Panc1 (cell line): ENCODE measurements at regions of chr11 and their contacts with region 1.

Region 1: GRCh38 chr11:65329944-65330403 is 3.7 kb upstream of the DPF2 start:
- DNase-seq: peak; percentile 80
- ATAC-seq: peak; percentile 56
- H3K4me3 ChIP-seq: peak overlapping the region in 1 of 2 experiments; percentile 0; a peak in 1 of 4 replicates
- H3K27ac ChIP-seq: 0 out of 2 replicates have a peak overlapping the region, but pooled peaks have one; percentile 5
- H3K4me1 ChIP-seq: peaks cover 5% of the 10 kb centered on the region
- H3K27me3 ChIP-seq: no peaks in the 10 kb centered on the region
- CTCF ChIP-seq: peak; percentile 94

Region 2: DNA sequence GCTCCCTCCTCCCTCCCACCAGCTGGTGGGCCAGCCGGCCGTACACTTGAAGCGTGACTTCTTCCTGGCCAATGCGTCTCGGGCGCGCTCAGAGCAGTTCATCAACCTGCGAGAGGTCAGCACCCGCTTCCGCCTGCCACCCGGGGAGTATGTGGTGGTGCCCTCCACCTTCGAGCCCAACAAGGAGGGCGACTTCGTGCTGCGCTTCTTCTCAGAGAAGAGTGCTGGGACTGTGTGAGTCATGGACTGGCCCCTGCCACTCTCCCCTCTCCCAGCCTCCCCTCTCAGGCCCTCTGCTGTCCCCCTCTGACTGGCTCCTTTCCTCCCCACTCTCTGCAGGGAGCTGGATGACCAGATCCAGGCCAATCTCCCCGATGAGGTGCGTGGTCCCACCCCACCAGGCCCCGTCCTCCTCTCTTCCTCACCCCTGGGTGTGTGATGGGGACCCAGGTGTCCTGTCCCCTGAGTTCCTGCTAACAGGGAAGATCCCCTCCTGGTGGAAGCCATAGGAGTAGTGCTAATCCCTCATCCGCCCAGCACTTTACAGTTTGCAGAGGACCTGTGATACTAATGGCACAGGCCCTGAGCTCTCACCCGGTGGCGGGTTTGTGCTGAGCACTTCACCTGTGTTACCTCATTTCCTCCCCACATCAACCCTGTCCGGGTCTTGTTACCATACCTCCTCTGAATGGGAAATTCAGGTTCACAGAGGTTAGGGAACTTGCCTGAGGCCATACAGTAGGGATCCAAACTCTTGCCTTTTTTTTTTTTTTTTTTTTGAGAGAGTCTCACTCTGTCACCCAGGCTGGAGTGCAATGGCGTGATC is 123.3 kb before region 1 on chr11:
- CTCF ChIA-PET with region 1: interaction called, 13 read pairs
- POLR2A ChIA-PET with region 1: no interaction called
- in situ Hi-C with region 1: no loop called
- intact Hi-C with region 1: no loop called
- DNase-seq: no peak
- ATAC-seq: no peak
- H3K4me3 ChIP-seq: no peak overlapping the region
- H3K27ac ChIP-seq: no peak overlapping the region
- H3K4me1 ChIP-seq: no peaks in the 10 kb centered on the region
- H3K27me3 ChIP-seq: no peaks in the 10 kb centered on the region
- CTCF ChIP-seq: no peak

Region 3: GRCh38 chr11:65225279-65226102 is 104.5 kb before region 1 on chr11:
- CTCF ChIA-PET with region 1: interaction called, 24 read pairs
- POLR2A ChIA-PET with region 1: no interaction called
- in situ Hi-C with region 1: no loop called
- intact Hi-C with region 1: no loop called
- DNase-seq: peak; percentile 27
- ATAC-seq: peak; percentile 91
- H3K4me3 ChIP-seq: peak overlapping the region; percentile 38 to 61
- H3K27ac ChIP-seq: peak overlapping the region; percentile 65
- H3K4me1 ChIP-seq: peaks cover 7% of the 10 kb centered on the region
- H3K27me3 ChIP-seq: no peaks in the 10 kb centered on the region
- CTCF ChIP-seq: peak; percentile 92

Region 4: GRCh38 chr11:65236194-65237059 is 93.5 kb before region 1 on chr11:
- CTCF ChIA-PET with region 1: no interaction called
- POLR2A ChIA-PET with region 1: no interaction called
- in situ Hi-C with region 1: no loop called
- intact Hi-C with region 1: no loop called
- DNase-seq: no peak
- ATAC-seq: peak; percentile 50; the same call in 1 of the 2 replicates
- H3K4me3 ChIP-seq: no peak overlapping the region
- H3K27ac ChIP-seq: no peak overlapping the region
- H3K4me1 ChIP-seq: no peaks in the 10 kb centered on the region
- H3K27me3 ChIP-seq: no peaks in the 10 kb centered on the region
- CTCF ChIP-seq: no peak

Region 5: GRCh38 chr11:65274735-65275682 is 55.0 kb before region 1 on chr11:
- CTCF ChIA-PET with region 1: interaction called, 88 read pairs
- POLR2A ChIA-PET with region 1: interaction called, 19 read pairs
- in situ Hi-C with region 1: no loop called
- intact Hi-C with region 1: loop called (anchors 1 kb)
- DNase-seq: no peak
- ATAC-seq: peak; percentile 84
- H3K4me3 ChIP-seq: no peak overlapping the region
- H3K27ac ChIP-seq: no peak overlapping the region
- H3K4me1 ChIP-seq: peaks cover 18% of the 10 kb centered on the region; the same call in 1 of the 2 replicates
- H3K27me3 ChIP-seq: no peaks in the 10 kb centered on the region
- CTCF ChIP-seq: peak; percentile 92

Region 6: DNA sequence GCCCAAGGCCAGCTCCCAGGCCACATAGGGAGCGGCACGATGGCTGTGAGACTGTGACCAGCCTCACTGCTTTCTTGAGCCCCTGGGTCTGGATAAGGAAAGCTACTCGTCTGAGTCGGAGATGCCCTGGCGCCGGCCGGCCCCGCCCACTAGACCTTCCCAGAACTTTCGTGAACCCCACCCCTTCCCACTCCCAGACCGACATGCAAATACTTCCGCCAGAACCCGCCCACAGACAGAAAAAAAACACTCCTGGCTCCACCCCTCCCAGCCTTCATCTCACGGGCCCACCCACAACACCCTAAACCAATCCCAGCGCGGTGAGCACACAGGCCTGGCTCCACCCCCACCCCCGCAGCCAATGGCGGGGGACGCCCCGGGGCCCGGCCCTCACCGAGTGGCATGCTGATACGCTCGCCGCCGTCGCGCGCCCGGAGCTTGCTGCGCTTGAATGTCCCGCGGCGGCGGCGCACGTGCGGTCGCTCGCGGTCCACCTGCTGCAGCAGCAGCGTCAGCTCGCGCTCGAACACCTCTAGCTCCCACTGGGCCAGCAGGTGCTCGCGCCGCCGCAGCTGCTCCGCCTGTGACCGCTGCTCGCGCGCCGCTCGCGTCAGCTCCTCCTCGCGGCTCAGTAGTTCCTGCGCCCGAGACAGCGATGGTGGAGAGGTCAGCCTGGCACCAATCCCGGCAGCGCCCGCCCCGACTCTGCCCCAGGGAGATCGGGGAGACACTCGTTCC is 277.1 kb after region 1 on chr11:
- CTCF ChIA-PET with region 1: no interaction called
- POLR2A ChIA-PET with region 1: interaction called, 17 read pairs
- in situ Hi-C with region 1: no loop called
- intact Hi-C with region 1: no loop called
- DNase-seq: no peak
- ATAC-seq: peak; percentile 70
- H3K4me3 ChIP-seq: no peak overlapping the region
- H3K27ac ChIP-seq: no peak overlapping the region
- H3K4me1 ChIP-seq: peaks cover 21% of the 10 kb centered on the region
- H3K27me3 ChIP-seq: no peaks in the 10 kb centered on the region
- CTCF ChIP-seq: no peak